Cardiac septum (tissue), 1 donor: ENCODE measurements at regions of chr18 and their contacts with region 1.

Region 1: DNA sequence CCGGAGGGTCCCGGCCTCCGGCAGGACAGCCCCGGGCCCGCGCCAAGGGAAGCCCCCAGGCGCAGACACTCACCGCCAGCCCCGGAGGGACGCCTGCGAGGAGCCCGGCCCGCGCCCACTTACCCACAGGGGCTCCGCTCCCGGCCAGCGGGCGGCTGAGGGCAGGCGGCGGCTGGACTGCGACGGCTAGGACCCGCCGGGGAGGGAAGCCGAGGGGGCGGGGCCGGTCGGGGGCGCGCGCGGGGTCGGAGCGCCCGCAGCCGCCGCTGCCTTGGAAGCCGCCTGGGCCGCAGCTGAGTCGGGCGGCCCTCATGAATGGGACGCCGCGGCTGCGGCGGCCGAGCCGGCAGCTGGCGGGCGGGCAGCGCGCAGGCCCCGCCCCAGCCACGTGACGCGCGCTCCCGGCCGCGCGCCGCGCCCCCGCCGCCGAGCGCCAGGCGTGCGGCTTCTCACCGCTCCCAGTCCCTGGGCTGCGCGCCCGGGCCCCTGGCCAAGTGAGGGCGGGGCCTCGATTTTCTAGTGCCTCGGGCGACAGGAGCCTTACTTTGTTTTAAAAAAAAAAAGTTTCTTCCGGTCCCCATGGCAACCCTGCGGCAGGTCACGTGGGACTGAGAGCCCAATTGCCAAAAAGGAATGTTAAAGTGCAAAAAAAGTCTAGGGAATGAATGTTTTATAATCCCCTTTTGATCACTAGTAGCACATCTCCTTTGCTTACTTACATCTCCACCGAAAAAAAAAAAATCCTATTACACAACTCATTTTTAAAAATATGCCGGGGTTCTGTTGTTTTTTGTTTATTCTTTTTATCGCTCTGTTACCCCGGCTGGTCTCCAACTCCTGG is at the start of gene LPIN2:
- DNase-seq: peak; percentile 99
- total RNA-seq, gene LPIN2: 9.3 TPM

Region 2: DNA sequence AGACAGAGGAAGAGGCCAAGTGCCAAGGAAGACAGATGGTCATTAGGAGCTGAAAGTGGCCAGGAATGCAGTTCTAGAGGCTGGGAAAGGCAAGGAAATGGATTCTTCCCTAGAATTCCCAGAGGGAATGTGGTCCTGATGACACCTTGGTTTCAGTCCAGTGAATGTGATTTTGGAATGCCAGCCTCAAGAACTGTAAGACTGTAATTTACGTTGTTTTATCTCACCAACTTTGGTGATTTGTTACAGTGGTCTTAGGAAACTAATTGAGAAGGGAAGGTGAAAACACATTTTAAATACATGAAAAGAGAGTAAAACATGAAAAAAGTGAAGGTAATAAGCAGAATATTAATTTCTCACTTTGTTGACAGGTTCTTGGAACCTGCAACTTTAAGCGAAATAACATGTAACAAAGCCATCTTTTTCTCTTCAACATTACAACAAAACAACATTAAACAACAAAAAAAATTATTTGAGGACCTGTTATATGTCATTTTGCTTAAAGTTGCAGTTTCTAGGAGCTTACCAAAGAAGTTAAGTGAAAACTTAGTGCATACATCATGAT is 812.1 kb before region 1 on chr18:
- intact Hi-C with region 1: no loop called
- DNase-seq: no peak

Region 3: GRCh38 chr18:2655178-2655953 is 357.8 kb before region 1 on chr18 and contains the start of gene SMCHD1:
- intact Hi-C with region 1: loop called (anchors 5 kb)
- DNase-seq: peak; percentile 93
- total RNA-seq, gene SMCHD1: 34.8 TPM

Region 4: GRCh38 chr18:3062798-3063680 is 49.9 kb after region 1 on chr18:
- intact Hi-C with region 1: loop called (anchors 5 kb)
- DNase-seq: peak; percentile 82

Region 5: GRCh38 chr18:3245853-3246634 is 232.9 kb after region 1 on chr18:
- intact Hi-C with region 1: loop called (anchors 2 kb)
- DNase-seq: peak; percentile 96

Region 6: GRCh38 chr18:3816610-3817363 is 803.6 kb after region 1 on chr18:
- intact Hi-C with region 1: no loop called
- DNase-seq: no peak